ENCODE measurements at regions of chr11 and their contacts with region 1.

Region 1: DNA sequence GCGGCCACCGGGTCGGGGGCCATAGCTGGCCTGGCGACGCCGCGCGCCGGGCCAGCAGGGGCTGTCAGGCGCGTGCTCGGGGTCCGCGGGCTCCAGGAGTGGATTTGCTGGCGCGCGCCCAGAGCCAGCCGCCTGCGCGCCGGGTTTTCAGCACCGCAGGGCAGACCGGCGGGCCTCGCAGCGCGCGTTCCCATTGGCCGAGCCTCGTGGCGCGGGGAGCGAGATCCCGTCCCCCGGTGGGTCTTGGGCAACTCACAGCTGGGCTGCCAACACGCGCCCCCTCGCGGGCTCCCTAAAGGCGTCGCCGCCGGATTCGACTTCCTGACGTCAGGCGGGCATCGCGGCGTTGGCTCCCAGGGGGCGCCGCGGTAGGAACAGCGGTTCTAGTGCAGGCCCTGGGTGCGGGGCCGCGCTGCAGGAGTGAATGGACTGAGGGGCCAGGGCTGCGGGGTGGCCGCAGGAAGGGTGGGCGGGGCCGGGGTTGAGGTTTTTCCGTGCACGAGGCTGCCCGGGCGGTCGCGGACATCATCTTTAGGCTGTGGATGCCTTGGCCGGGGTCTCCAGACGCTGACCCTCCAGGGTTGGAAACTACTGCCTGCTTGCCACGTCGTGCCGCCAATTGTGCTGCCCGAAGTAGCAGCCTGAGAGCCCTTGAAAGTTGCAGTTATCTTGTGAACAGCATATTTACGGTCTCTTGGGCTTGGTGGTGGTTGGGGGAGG is at the start of gene FADS1:
- DNase-seq: peak; percentile 91
- ATAC-seq: peak; percentile 46 to 66 (median 60)
- H3K4me3 ChIP-seq: peak within 1 kb of the TSS; percentile 85
- H3K27ac ChIP-seq: peak within 1 kb of the TSS; percentile 92
- H3K4me1 ChIP-seq: peaks cover 13% of the 10 kb centered on the region
- H3K27me3 ChIP-seq: no peaks in the 10 kb centered on the region
- CTCF ChIP-seq: peak; percentile 38
- total RNA-seq, gene FADS1: 13.7 to 93.2 (median 20.6) TPM

Region 2: DNA sequence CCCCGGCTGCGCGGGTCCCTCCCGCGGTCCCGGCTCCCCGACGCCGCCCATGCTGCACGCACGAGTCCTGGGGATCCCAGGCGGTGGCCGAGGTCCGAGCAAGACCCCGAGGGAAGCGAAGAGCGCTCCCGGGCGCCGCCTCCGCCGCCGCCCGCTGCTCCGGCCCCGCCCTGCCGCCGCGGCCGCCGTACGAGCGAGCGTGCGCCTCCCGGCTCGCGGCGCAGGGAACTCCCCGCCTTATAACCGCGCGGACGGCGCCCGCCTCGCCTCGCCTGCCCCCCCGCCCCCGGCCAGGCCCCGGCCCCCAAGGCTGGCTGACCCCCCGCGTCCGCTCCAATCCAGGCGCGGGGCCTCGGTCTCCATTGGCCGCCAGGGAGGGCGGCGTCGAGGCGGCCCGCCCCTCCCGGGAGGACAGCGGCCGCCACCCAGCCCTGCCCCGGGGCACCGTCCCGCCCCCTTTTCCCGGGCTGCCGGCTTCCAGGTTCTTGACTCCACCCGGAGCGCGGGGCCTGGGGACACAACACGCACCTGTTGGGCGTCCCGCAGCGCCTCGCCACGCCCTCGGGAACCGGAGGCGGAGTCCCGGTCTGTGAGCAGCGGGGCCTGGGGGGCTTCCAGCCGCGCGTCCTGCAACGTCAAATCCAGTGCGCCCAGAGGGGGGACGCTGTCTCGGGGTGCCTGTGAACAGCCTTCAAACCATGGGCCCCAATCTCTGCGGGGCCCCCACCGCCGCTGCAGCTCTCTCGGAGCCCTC is 74.6 kb after region 1 on chr11 and contains the start of gene FADS3:
- intact Hi-C with region 1: loop called in 1 of 2 experiments (anchors 5 kb)
- DNase-seq: peak; percentile 92 to 94
- ATAC-seq: peak; percentile 77 to 88 (median 80)
- H3K4me3 ChIP-seq: peak within 1 kb of the TSS; percentile 91
- H3K27ac ChIP-seq: peak within 1 kb of the TSS; percentile 87
- H3K4me1 ChIP-seq: peaks cover 23% of the 10 kb centered on the region
- H3K27me3 ChIP-seq: no peaks in the 10 kb centered on the region
- CTCF ChIP-seq: no peak
- total RNA-seq, gene FADS3: 49.3 to 247 (median 57.9) TPM